CD8-positive, alpha-beta T cell (primary cell): ENCODE measurements at regions of chr14 and their contacts with region 1.

Region 1: DNA sequence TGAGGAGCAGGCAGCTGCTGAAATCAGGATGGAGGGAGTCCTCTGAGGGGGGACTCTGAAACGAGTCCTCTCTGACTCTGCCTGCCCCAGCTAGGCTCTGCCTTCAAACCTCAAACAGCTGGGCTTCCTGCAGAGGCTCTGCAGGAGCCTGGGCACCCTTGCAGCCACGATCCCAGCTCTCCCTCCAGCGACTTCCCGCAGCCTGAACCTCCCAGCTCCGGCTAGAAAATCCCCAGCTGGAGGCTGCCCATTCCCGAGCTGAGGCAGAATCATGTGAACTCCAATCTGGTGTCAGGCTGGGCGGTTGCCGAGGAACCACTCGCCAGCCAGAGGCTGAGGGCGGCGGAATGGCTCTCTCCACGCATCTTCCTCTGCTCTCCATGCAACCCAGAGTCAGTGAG is at the start of gene GPR68:
- DNase-seq: peak in 5 of 9 experiments; percentile 38 to 69 (median 48)
- ATAC-seq: no peak
- H3K4me3 ChIP-seq: peak within 1 kb of the TSS; percentile 49 to 56
- H3K4me3 Mint-ChIP-seq: peak within 1 kb of the TSS; percentile 87
- H3K27ac ChIP-seq: peak within 1 kb of the TSS; percentile 68 to 92
- H3K27ac Mint-ChIP-seq: peak within 1 kb of the TSS; percentile 94
- H3K4me1 ChIP-seq: peaks cover 64% of the 10 kb centered on the region
- H3K4me1 Mint-ChIP-seq: peaks cover 89% of the 10 kb centered on the region
- H3K27me3 ChIP-seq: no peaks in the 10 kb centered on the region
- H3K27me3 Mint-ChIP-seq: no peaks in the 10 kb centered on the region
- CTCF ChIP-seq: no peak
- total RNA-seq, gene GPR68: 3.6 to 5.1 TPM

Region 2: DNA sequence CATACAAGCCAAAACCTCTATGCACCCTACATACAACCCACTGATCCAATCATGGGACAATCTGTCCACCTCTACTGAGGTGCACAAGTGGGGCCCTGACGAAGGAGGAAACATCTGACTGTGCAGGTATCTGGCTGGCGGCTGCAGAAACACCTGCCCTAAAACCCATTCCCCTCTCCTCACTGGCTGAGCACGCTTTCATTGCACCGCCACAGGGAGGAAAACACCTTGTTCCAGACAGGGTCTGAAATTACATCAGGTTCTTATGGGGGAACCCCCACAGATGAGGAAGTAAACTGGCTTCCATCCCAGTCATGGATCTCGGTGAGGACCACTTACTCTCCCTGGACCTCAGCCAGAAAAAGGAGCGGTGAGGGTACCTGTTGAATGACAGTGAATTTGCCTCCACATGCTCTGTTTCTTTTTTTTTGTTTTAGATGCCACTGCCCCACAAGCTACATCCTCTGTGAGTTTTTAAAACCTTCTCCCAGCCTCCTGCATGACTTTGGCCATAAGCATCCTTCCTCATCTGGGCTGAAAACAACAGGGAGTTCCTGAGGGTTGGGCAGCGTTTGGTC is 154.5 kb before region 1 on chr14:
- CTCF ChIA-PET with region 1: no interaction called
- POLR2A ChIA-PET with region 1: no interaction called
- intact Hi-C with region 1: no loop called
- DNase-seq: no peak
- ATAC-seq: no peak
- H3K4me3 ChIP-seq: no peak overlapping the region
- H3K4me3 Mint-ChIP-seq: no peak overlapping the region
- H3K27ac ChIP-seq: no peak overlapping the region
- H3K27ac Mint-ChIP-seq: no peak overlapping the region
- H3K4me1 ChIP-seq: peaks cover 15% of the 10 kb centered on the region
- H3K4me1 Mint-ChIP-seq: peaks cover 15% of the 10 kb centered on the region
- H3K27me3 ChIP-seq: no peaks in the 10 kb centered on the region
- H3K27me3 Mint-ChIP-seq: no peaks in the 10 kb centered on the region
- CTCF ChIP-seq: no peak

Region 3: DNA sequence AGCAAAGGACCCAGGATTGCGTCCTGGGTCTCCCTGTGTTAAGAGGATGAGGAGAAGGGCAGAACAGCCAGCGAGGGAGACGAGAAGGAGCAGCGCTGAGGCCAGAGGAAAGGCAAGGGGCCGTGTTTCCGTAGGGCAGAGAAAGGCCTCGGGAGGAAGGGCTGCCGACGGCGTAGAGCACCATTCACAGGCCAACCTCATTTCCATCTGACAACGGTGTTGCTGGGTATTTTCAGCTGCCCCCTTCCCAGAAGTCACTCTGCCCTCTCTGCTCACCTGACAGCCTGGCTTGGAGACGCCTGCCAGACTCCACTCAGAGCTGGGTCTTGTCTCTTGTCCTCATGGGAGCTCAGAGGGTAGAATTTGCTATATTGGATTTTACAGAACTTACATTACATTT is 51.4 kb before region 1 on chr14:
- CTCF ChIA-PET with region 1: interaction called, 3 read pairs
- POLR2A ChIA-PET with region 1: interaction called, 11 read pairs
- intact Hi-C with region 1: loop called in 1 of 2 experiments (anchors 5 kb)
- DNase-seq: no peak
- ATAC-seq: no peak
- H3K4me3 ChIP-seq: no peak overlapping the region
- H3K4me3 Mint-ChIP-seq: no peak overlapping the region
- H3K27ac ChIP-seq: no peak overlapping the region
- H3K27ac Mint-ChIP-seq: no peak overlapping the region
- H3K4me1 ChIP-seq: peaks cover 13% of the 10 kb centered on the region
- H3K4me1 Mint-ChIP-seq: peaks cover 20% of the 10 kb centered on the region
- H3K27me3 ChIP-seq: no peaks in the 10 kb centered on the region
- H3K27me3 Mint-ChIP-seq: no peaks in the 10 kb centered on the region
- CTCF ChIP-seq: no peak